H1 (cell line): ENCODE measurements at regions of chr3 and their contacts with region 1.

Region 1: DNA sequence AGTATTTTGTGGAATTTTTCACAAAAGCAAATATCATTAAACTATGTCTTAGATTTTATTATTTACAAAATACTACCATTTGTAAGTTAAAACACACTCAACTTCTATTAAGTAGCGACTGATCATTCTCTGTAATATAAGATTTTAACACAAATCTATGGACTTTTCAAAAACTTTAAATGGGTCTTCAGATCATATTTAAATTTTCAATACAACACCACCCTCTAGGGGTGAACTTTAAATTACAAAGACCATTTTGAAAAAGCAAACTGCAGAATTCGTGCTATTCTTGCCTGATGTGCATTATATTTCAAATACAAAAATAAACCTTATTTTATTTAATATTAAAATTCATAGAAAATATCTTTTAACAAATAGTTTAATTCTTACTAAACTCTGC is 8.2 kb upstream of the VGLL4 start:
- DNase-seq: no peak
- H3K4me3 ChIP-seq: peak overlapping the region in 1 of 4 experiments; percentile 0; a peak in 1 of 8 replicates
- H3K27ac ChIP-seq: no peak overlapping the region
- H3K4me1 ChIP-seq: peaks cover 2 to 11% (median 5%) of the 10 kb centered on the region in 4 experiments; a peak in 4 of 7 replicates
- H3K27me3 ChIP-seq: no peaks in the 10 kb centered on the region
- CTCF ChIP-seq: peak in 2 of 3 experiments; percentile 9 to 12; a peak in 2 of 4 replicates
- EP300 ChIP-seq: no peak
- POLR2A ChIP-seq: no peak
- RAD21 ChIP-seq: peak in 1 of 2 experiments; percentile 62; a peak in 3 of 4 replicates

Region 2: GRCh38 chr3:11385891-11386290 is 266.0 kb before region 1 on chr3:
- CTCF ChIA-PET with region 1: interaction called, 79 read pairs
- POLR2A ChIA-PET with region 1: no interaction called
- DNase-seq: no peak
- H3K4me3 ChIP-seq: no peak overlapping the region
- H3K27ac ChIP-seq: no peak overlapping the region
- H3K4me1 ChIP-seq: peaks cover 0 to 7% (median 0%) of the 10 kb centered on the region in 4 experiments; a peak in 2 of 7 replicates
- H3K27me3 ChIP-seq: no peaks in the 10 kb centered on the region
- CTCF ChIP-seq: no peak
- EP300 ChIP-seq: no peak
- POLR2A ChIP-seq: no peak
- RAD21 ChIP-seq: no peak

Region 3: GRCh38 chr3:11392014-11392859 is 259.7 kb before region 1 on chr3:
- CTCF ChIA-PET with region 1: interaction called, 14 read pairs
- POLR2A ChIA-PET with region 1: no interaction called
- DNase-seq: no peak
- H3K4me3 ChIP-seq: no peak overlapping the region
- H3K27ac ChIP-seq: no peak overlapping the region
- H3K4me1 ChIP-seq: peaks cover 0 to 5% (median 0%) of the 10 kb centered on the region in 4 experiments; a peak in 1 of 7 replicates
- H3K27me3 ChIP-seq: no peaks in the 10 kb centered on the region
- CTCF ChIP-seq: no peak
- EP300 ChIP-seq: no peak
- POLR2A ChIP-seq: no peak
- RAD21 ChIP-seq: no peak

Region 4: GRCh38 chr3:11539677-11540076 is 112.2 kb before region 1 on chr3:
- CTCF ChIA-PET with region 1: interaction called, 13 read pairs
- POLR2A ChIA-PET with region 1: no interaction called
- DNase-seq: no peak
- H3K4me3 ChIP-seq: no peak overlapping the region
- H3K27ac ChIP-seq: no peak overlapping the region
- H3K4me1 ChIP-seq: peaks cover 0 to 2% (median 0%) of the 10 kb centered on the region in 4 experiments; a peak in 2 of 7 replicates
- H3K27me3 ChIP-seq: no peaks in the 10 kb centered on the region
- CTCF ChIP-seq: peak; percentile 48 to 67 (median 51)
- EP300 ChIP-seq: no peak
- POLR2A ChIP-seq: no peak
- RAD21 ChIP-seq: peak; percentile 69 to 75

Region 5: GRCh38 chr3:11662402-11662990 is 10.6 kb after region 1 on chr3:
- CTCF ChIA-PET with region 1: interaction called, 10 read pairs
- POLR2A ChIA-PET with region 1: interaction called, 3 read pairs
- DNase-seq: no peak
- H3K4me3 ChIP-seq: no peak overlapping the region
- H3K27ac ChIP-seq: no peak overlapping the region
- H3K4me1 ChIP-seq: peaks cover 0 to 4% (median 1%) of the 10 kb centered on the region in 4 experiments; a peak in 3 of 7 replicates
- H3K27me3 ChIP-seq: no peaks in the 10 kb centered on the region
- CTCF ChIP-seq: peak in 2 of 3 experiments; percentile 28 to 63; a peak in 2 of 4 replicates
- EP300 ChIP-seq: no peak
- POLR2A ChIP-seq: no peak
- RAD21 ChIP-seq: peak; percentile 41 to 55; a peak in 3 of 4 replicates

Region 6: DNA sequence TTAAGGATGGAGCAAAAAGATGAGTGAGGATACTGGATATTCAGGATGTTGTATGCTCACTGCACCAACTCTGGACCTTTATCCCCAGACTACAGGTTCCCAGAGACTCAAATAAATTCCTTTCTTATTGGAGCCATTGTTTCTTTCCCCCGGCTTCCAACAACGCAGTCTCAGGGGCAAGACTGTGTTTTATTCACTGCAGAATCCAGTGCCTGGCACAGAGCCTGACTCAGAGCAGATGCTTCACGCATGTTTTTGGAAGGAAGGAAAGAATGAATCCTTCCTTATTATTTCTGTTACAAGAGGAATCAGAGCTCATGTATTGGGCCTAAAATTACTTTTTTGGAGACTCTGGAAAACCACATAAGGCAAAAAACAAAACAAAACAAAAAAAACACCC is 87.8 kb after region 1 on chr3:
- CTCF ChIA-PET with region 1: no interaction called
- POLR2A ChIA-PET with region 1: no interaction called
- DNase-seq: no peak
- H3K4me3 ChIP-seq: no peak overlapping the region
- H3K27ac ChIP-seq: no peak overlapping the region
- H3K4me1 ChIP-seq: no peaks in the 10 kb centered on the region
- H3K27me3 ChIP-seq: no peaks in the 10 kb centered on the region
- CTCF ChIP-seq: no peak
- EP300 ChIP-seq: no peak
- POLR2A ChIP-seq: no peak
- RAD21 ChIP-seq: no peak

Region 7: GRCh38 chr3:11803977-11804892 is 152.3 kb after region 1 on chr3:
- CTCF ChIA-PET with region 1: interaction called, 23 read pairs
- POLR2A ChIA-PET with region 1: no interaction called
- DNase-seq: no peak
- H3K4me3 ChIP-seq: no peak overlapping the region
- H3K27ac ChIP-seq: no peak overlapping the region
- H3K4me1 ChIP-seq: no peaks in the 10 kb centered on the region
- H3K27me3 ChIP-seq: no peaks in the 10 kb centered on the region
- CTCF ChIP-seq: peak; percentile 57 to 88 (median 76)
- EP300 ChIP-seq: no peak
- POLR2A ChIP-seq: no peak
- RAD21 ChIP-seq: peak; percentile 74 to 80